ENCODE measurements at regions of chr14 and their contacts with region 1.

Region 1: GRCh38 chr14:59189786-59190771 is 1.6 kb downstream of the DAAM1 start:
- DNase-seq: peak; percentile 60
- ATAC-seq: peak; percentile 10
- H3K4me3 Mint-ChIP-seq: peak overlapping the region; percentile 93
- H3K27ac Mint-ChIP-seq: peak overlapping the region; percentile 87
- H3K4me1 Mint-ChIP-seq: peaks cover 21% of the 10 kb centered on the region
- H3K27me3 Mint-ChIP-seq: peaks cover 5% of the 10 kb centered on the region
- CTCF ChIP-seq: no peak

Region 2: DNA sequence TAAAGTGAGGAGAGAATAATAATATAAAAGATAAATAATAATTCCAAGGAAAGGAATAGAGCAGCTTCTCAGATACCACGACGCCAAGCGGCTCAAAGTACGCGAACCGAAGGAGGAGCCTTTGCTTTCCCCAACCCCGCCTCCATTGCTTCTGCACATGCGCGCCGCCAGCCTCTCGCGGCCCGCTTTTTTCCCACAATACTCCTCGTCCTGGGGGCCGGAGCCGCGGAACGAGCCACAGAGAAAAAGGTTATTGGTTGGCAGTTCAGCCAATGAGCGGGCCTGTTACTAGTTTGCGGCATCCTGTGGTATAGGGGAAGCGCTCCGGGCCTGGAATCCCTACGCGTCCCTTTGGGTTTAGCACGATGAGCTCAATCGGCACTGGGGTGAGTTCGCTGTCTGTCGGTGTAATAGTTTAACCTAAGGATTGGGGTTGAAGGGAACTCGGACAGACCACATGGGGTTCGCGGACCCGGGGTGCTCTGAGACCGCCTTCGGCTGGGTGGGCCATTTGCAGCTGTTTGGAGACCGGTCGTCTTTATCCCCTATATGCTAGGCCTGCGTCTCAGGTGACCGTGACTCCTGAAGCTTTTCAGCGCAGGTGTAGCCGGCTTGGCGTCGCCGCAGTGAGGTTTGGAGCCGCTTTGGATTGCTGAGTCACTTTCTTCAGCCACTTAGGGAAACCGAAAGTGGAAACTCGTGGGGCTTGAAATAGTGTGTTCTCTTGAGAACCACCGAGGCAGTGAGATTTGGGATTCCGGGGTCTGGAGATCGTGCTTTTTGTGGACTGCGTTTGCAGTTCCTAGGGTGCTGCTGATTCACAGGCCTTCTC is 945.3 kb before region 1 on chr14 and contains the start of gene PSMA3:
- CTCF ChIA-PET with region 1: no interaction called
- POLR2A ChIA-PET with region 1: no interaction called
- intact Hi-C with region 1: loop called (anchors 2 kb)
- DNase-seq: peak; percentile 94
- ATAC-seq: peak; percentile 91
- H3K4me3 Mint-ChIP-seq: peak within 1 kb of the TSS; percentile 98
- H3K27ac Mint-ChIP-seq: peak within 1 kb of the TSS; percentile 98
- H3K4me1 Mint-ChIP-seq: peaks cover 51% of the 10 kb centered on the region
- H3K27me3 Mint-ChIP-seq: peaks cover 1% of the 10 kb centered on the region
- CTCF ChIP-seq: no peak
- total RNA-seq, gene PSMA3: 204 and 208 TPM in 2 replicates

Region 3: DNA sequence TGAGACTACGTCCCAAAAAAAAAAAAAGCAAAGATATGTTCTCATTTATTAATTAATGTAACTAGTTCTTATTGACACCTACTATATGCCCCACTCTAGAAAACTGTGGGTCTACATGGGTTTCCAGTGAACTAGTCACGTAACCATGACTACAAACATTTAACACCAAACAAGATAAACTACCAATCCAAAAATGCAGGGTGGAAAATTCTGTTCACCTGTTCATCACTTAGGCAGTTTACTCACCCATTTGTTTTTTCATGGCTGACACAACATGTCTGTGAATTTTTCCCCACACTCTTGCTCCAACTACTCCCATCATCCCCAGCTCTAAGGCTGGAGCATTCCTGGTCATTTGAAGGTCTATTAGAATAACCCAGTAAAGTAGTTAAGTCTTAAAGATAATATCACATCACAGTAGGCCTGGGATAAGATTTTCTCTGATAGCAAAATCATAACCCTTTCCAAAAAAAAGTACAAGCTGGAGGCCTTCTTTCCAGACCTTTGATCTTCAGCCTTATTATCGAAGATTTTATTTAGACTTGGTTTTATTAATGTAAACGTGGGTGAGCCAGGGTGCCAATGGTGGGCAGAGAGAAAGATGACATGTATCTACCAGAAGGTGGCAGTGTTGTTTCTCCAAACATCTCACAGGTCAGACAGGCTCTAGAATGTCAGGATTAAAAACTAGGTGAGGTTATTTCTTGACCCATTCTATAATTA is 63.2 kb before region 1 on chr14:
- CTCF ChIA-PET with region 1: interaction called, 6 read pairs
- POLR2A ChIA-PET with region 1: interaction called, 4 read pairs
- intact Hi-C with region 1: loop called (anchors 1 kb)
- DNase-seq: no peak
- ATAC-seq: peak; percentile 95
- H3K4me3 Mint-ChIP-seq: no peak overlapping the region
- H3K27ac Mint-ChIP-seq: no peak overlapping the region
- H3K4me1 Mint-ChIP-seq: no peaks in the 10 kb centered on the region
- H3K27me3 Mint-ChIP-seq: peaks cover 3% of the 10 kb centered on the region
- CTCF ChIP-seq: peak; percentile 68

Region 4: GRCh38 chr14:59245809-59246295 is 55.8 kb after region 1 on chr14:
- CTCF ChIA-PET with region 1: interaction called, 4 read pairs
- POLR2A ChIA-PET with region 1: no interaction called
- intact Hi-C with region 1: loop called (anchors 2 kb)
- DNase-seq: no peak
- ATAC-seq: peak; percentile 64
- H3K4me3 Mint-ChIP-seq: peak overlapping the region; percentile 50
- H3K27ac Mint-ChIP-seq: peak overlapping the region; percentile 65
- H3K4me1 Mint-ChIP-seq: peaks cover 39% of the 10 kb centered on the region
- H3K27me3 Mint-ChIP-seq: no peaks in the 10 kb centered on the region
- CTCF ChIP-seq: no peak

Region 5: DNA sequence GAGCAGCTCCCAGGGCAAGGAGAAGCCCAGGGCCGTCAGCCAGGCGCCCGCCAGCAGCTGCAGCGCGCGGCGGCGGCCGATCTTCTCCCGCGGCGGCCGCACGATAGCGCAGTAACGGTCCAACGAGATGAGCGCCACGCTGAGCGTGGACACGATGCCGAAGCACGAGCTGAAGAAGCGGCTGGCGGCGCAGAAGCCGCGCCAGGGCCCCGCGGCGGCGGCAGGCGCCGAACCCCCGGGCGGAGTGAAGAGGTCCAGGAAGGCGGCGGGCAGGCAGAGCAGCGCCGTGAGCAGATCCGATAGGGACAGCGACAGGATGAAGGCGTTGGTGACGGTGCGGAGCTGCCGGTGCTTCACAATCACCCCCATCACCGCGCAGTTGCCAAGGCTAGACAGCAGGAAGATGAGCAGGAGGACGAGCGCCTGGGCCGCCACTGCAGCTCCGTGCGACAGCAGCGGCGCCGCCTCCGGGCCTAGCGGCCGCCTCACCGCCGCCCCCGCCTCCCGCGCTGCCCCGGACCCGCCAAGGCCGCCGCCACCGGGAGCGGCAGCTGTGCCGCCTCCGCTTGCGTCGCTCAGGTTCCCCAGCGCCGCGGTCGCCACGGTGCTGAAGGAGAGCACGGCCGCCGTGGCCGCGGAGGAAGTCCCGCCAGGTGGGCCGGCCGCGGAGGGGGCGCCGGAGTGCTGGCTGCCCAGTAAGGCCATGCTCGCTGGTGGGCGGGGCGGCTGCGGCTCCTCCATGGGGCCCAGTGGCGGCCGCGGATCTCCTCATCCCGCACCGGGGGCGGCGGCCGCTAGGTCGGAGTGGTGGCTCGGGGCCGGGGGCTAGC is 274.6 kb after region 1 on chr14:
- CTCF ChIA-PET with region 1: no interaction called
- POLR2A ChIA-PET with region 1: interaction called, 4 read pairs
- intact Hi-C with region 1: loop called (anchors 1 kb)
- DNase-seq: peak; percentile 64
- ATAC-seq: peak; percentile 68
- H3K4me3 Mint-ChIP-seq: peak overlapping the region; percentile 86
- H3K27ac Mint-ChIP-seq: peak overlapping the region; percentile 48
- H3K4me1 Mint-ChIP-seq: peaks cover 14% of the 10 kb centered on the region
- H3K27me3 Mint-ChIP-seq: no peaks in the 10 kb centered on the region
- CTCF ChIP-seq: no peak

Region 6: DNA sequence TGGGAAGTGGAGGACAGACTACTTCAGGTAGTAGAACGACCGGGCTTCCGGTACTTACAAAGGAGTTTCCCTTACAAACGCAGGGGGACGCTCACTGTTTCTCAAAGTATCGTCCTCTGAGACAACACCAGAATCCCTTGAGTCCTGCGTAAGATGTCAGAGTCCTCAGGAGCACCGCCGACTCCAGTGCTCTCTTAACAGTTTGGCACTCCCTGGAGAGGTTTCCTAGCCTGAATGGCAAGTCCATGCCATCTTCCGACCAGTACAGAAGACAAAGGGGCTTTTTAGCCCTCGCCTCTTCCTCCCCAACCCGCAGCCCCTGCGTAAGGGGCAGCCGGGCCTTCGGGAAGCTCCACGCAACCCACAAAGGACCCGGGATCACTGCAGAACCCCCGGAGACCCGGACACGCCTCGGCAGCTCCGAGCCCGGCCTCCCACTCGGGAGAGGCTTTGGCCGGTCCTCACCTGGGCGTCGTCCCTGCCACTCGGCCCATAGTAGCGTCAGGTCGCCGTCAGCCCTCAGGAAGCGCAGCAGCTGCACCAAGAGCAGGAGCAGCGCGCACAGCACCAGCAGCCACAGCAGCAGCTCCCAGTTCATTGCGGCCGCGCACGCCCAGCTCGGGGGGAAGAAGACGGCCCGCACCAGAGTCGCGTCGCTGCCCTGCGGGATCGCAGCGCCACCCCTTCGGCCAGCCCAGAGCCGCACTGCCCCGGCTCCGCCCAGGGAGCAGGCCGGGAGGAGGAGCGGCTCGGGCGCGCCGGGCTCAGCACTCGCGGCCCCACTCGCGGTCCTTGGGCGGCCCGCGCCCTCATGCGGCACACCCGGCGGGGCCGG is 974.9 kb after region 1 on chr14 and contains the start of gene DHRS7:
- CTCF ChIA-PET with region 1: no interaction called
- POLR2A ChIA-PET with region 1: no interaction called
- intact Hi-C with region 1: loop called (anchors 1 kb)
- DNase-seq: peak; percentile 70
- ATAC-seq: peak; percentile 88
- H3K4me3 Mint-ChIP-seq: peak within 1 kb of the TSS; percentile 99
- H3K27ac Mint-ChIP-seq: peak within 1 kb of the TSS; percentile 99
- H3K4me1 Mint-ChIP-seq: peaks cover 39% of the 10 kb centered on the region
- H3K27me3 Mint-ChIP-seq: no peaks in the 10 kb centered on the region
- CTCF ChIP-seq: no peak
- total RNA-seq, gene DHRS7: 41.5 and 47.1 TPM in 2 replicates